ENCODE measurements at regions of chrX and their contacts with region 1.

Region 1: DNA sequence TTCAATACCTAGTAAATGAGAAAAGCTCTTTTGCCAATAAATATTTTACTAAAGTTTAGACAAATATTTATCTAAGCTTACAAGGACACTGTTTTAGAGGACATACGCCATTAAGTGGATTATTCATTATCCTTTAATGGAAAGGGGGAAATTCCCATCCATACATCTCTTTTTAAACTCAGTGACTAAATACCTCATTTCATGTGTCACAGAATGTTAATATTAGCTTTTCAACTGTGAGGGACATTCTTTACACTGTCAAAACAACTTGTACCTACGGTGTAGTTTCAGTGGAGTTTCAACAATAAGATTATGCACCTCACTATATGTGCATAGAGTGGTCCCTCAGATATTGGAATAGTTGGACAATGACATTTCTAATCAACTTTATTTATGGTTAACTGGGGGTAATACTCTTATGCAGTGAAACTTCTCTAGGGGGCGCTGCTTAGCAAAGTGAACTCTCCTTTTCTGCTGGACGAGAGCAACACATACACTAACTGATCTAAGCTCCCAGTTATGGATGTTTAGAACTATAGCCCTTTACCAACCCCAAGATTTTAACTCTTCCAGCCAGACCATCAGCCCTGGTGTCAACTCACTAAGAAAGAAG is 9.7 kb downstream of the HS6ST2 start:
- DNase-seq: peak; percentile 60
- ATAC-seq: peak; percentile 75
- H3K4me3 ChIP-seq: peak overlapping the region; percentile 25; the same call in 1 of the 2 replicates
- H3K27ac ChIP-seq: peak overlapping the region; percentile 100
- H3K4me1 ChIP-seq: peaks cover 36% of the 10 kb centered on the region
- H3K27me3 ChIP-seq: no peaks in the 10 kb centered on the region
- CTCF ChIP-seq: peak; percentile 63

Region 2: DNA sequence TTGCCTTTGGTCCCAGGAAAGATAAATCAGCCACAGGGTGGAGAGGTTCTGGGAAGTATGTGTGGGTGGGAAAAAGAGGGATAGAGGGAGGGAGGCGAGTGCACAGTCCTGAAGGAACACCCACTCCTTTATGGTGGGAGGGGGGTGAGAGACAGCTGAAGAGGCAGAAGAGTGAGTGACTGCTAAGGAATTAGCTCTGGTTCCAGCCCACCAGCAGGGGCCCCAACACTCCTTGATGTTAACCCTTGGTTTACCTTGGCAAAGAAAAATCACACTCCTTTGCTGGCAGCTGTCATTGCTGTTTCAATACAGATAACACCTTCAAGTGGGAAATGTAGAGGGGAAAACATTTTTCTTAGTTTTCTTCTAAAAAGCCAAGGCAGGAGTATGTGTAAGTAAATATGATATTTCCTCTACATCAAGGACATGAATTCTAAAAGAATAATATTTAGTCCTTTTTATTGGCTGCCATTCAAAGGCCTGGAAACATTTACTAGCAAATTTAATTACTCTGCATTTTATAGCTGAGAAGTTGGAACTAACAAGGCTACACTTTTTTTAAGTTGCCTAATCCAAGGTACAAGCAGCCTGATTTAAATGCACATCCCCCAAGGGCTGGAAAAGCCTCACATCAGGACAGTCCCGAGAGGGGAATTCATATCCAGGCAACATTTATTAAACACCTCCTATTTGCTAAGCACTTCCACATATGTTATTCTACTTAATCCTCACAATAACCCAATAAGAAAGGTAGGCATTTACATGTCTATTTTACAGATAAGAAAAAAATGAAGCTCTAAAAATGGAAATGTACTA is 72.0 kb before region 1 on chrX:
- CTCF ChIA-PET with region 1: no interaction called
- POLR2A ChIA-PET with region 1: no interaction called
- intact Hi-C with region 1: loop called (anchors 5 kb)
- DNase-seq: no peak
- ATAC-seq: peak; percentile 57
- H3K4me3 ChIP-seq: no peak overlapping the region
- H3K27ac ChIP-seq: 0 out of 2 replicates have a peak overlapping the region, but pooled peaks have one; percentile 54
- H3K4me1 ChIP-seq: peaks cover 22% of the 10 kb centered on the region
- H3K27me3 ChIP-seq: no peaks in the 10 kb centered on the region
- CTCF ChIP-seq: no peak

Measured in PC-3 (cell line).